AG04450 (cell line): ENCODE measurements at regions of chr20 and their contacts with region 1.

Region 1: GRCh38 chr20:51800060-51800794 is 2.1 kb downstream of the SALL4 start:
- DNase-seq: no peak
- H3K4me3 ChIP-seq: peak overlapping the region; percentile 58
- H3K27ac ChIP-seq: no peak overlapping the region
- H3K27me3 ChIP-seq: peaks cover 31% of the 10 kb centered on the region
- CTCF ChIP-seq: peak; percentile 85

Region 2: DNA sequence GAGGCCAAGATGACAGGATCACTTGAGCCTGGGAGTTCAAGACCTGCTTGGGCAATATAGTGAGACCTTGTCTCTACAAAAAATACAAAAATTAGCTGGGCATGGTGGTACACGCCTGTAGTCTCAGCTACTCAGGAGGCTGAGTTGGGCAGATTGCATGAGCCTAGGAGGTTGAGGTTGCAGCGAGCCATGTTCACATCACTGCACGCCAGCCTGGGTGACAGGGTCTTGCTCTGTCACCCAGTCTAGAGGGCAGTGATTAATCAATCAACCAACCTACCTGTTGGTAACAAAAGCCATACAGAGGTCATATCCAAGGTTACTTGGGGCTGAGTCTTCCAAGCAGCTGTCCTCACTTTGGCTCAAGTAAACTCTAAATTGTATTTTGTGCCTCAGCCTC is 24.0 kb before region 1 on chr20:
- CTCF ChIA-PET with region 1: interaction called, 24 read pairs
- POLR2A ChIA-PET with region 1: no interaction called
- DNase-seq: no peak
- H3K4me3 ChIP-seq: no peak overlapping the region
- H3K27ac ChIP-seq: no peak overlapping the region
- H3K27me3 ChIP-seq: no peaks in the 10 kb centered on the region
- CTCF ChIP-seq: no peak

Region 3: GRCh38 chr20:51784299-51784698 is 15.9 kb before region 1 on chr20:
- CTCF ChIA-PET with region 1: interaction called, 14 read pairs
- POLR2A ChIA-PET with region 1: no interaction called
- DNase-seq: no peak
- H3K4me3 ChIP-seq: no peak overlapping the region
- H3K27ac ChIP-seq: no peak overlapping the region
- H3K27me3 ChIP-seq: no peaks in the 10 kb centered on the region
- CTCF ChIP-seq: no peak

Region 4: DNA sequence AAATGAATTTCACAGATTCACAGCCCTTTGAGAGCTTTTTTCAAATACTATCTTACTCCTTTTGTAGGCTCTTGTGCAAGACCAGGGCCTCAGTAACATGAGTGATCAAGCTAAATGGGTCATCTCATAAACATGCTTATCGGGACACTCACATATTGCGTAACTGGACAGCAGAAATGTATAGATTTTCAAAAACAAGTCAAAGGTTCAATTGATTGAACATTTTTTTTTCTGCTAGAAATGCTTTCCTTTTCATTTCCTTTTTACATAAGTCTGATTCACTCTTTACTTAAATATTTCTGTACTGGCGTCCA is 10.8 kb after region 1 on chr20:
- CTCF ChIA-PET with region 1: interaction called, 21 read pairs
- POLR2A ChIA-PET with region 1: no interaction called
- DNase-seq: peak; percentile 39
- H3K4me3 ChIP-seq: no peak overlapping the region
- H3K27ac ChIP-seq: no peak overlapping the region
- H3K27me3 ChIP-seq: no peaks in the 10 kb centered on the region
- CTCF ChIP-seq: no peak

Region 5: DNA sequence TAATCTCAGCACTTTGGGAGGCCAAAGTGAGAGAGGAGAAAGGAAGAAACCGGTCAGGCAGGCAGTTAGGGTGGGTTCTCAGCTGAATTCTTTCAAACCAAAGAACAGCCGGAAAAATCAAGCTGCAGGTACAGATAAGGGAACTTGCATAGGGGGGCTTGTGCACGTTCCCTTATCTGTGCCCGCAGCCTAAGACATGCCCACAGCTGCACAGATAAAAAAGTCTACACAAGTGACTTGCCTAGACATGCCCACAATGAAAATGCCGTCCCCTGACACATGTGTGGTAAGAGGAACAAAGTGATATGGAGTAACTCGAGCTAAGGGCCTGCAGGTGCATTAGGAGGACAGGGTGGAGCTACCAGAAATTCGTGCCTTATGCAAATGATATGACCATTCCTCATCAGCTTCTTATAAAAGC is 177.9 kb after region 1 on chr20:
- CTCF ChIA-PET with region 1: interaction called, 12 read pairs
- POLR2A ChIA-PET with region 1: no interaction called
- DNase-seq: no peak
- H3K4me3 ChIP-seq: no peak overlapping the region
- H3K27ac ChIP-seq: no peak overlapping the region
- H3K27me3 ChIP-seq: no peaks in the 10 kb centered on the region
- CTCF ChIP-seq: no peak

Region 6: GRCh38 chr20:52031563-52032303 is 231.5 kb after region 1 on chr20:
- CTCF ChIA-PET with region 1: interaction called, 7 read pairs
- POLR2A ChIA-PET with region 1: interaction called, 20 read pairs
- DNase-seq: peak; percentile 82
- H3K4me3 ChIP-seq: peak overlapping the region; percentile 4
- H3K27ac ChIP-seq: peak overlapping the region; percentile 95
- H3K27me3 ChIP-seq: no peaks in the 10 kb centered on the region
- CTCF ChIP-seq: no peak

Region 7: GRCh38 chr20:52083627-52084232 is 283.5 kb after region 1 on chr20:
- CTCF ChIA-PET with region 1: interaction called, 26 read pairs
- POLR2A ChIA-PET with region 1: no interaction called
- DNase-seq: peak; percentile 54
- H3K4me3 ChIP-seq: no peak overlapping the region
- H3K27ac ChIP-seq: no peak overlapping the region
- H3K27me3 ChIP-seq: no peaks in the 10 kb centered on the region
- CTCF ChIP-seq: peak; percentile 72

Region 8: GRCh38 chr20:52137850-52138249 is 337.6 kb after region 1 on chr20:
- CTCF ChIA-PET with region 1: no interaction called
- POLR2A ChIA-PET with region 1: no interaction called
- DNase-seq: no peak
- H3K4me3 ChIP-seq: no peak overlapping the region
- H3K27ac ChIP-seq: no peak overlapping the region
- H3K27me3 ChIP-seq: no peaks in the 10 kb centered on the region
- CTCF ChIP-seq: no peak